ENCODE measurements at regions of chr20 and their contacts with region 1.

Region 1: DNA sequence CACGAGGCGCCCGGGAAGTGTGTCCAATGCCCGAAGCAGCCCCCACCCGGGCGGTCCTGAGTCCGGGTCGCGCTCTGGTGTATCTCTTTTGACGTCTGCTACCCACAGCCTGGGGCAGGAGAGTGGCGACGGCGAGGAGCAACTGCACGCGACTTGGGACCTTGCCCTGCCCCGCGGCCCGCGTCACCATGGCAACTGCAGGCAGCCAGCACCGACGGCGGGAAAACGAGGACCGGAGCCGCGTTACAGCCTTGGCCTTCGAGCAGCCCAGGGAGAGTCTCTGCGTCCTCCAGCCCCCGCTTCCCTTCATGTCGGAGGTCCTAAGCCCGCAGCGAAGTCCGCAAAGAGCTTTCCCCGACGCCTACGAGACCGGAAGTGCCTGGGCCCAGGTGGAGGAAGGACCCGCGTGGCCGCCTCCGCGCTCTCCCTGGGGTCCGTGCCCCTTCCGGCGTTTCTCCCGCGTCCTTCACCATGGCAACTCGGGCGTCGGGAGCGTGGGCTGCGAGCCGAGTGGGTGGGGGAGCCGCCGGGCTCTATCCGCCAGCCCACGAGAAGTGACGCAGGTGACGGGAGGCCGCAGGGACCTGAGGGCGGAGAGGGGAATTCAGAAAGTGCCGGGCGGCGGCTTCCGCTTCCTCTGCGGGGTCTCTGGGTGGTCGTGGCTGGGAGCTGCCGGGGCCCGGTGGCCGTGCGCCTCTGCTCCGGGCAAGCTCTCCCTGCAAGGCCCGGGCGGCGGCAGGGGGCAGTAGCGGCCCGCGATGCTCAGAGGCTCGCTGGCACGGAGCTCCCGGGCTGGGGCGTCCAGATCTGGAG is 88.6 kb upstream of the TGM3 start:
- DNase-seq: peak; percentile 89
- ATAC-seq: peak; percentile 94
- H3K4me3 Mint-ChIP-seq: peak overlapping the region; percentile 76
- H3K27ac Mint-ChIP-seq: no peak overlapping the region
- H3K4me1 Mint-ChIP-seq: no peaks in the 10 kb centered on the region
- H3K27me3 Mint-ChIP-seq: peaks cover 42% of the 10 kb centered on the region
- CTCF ChIP-seq: peak; percentile 57

Region 2: GRCh38 chr20:1622450-1622849 is 584.7 kb before region 1 on chr20:
- CTCF ChIA-PET with region 1: no interaction called
- POLR2A ChIA-PET with region 1: no interaction called
- DNase-seq: no peak
- ATAC-seq: no peak
- H3K4me3 Mint-ChIP-seq: no peak overlapping the region
- H3K27ac Mint-ChIP-seq: no peak overlapping the region
- H3K4me1 Mint-ChIP-seq: peaks cover 19% of the 10 kb centered on the region
- H3K27me3 Mint-ChIP-seq: peaks cover under 1% of the 10 kb centered on the region; the same call in 1 of the 2 replicates
- CTCF ChIP-seq: no peak

Region 3: DNA sequence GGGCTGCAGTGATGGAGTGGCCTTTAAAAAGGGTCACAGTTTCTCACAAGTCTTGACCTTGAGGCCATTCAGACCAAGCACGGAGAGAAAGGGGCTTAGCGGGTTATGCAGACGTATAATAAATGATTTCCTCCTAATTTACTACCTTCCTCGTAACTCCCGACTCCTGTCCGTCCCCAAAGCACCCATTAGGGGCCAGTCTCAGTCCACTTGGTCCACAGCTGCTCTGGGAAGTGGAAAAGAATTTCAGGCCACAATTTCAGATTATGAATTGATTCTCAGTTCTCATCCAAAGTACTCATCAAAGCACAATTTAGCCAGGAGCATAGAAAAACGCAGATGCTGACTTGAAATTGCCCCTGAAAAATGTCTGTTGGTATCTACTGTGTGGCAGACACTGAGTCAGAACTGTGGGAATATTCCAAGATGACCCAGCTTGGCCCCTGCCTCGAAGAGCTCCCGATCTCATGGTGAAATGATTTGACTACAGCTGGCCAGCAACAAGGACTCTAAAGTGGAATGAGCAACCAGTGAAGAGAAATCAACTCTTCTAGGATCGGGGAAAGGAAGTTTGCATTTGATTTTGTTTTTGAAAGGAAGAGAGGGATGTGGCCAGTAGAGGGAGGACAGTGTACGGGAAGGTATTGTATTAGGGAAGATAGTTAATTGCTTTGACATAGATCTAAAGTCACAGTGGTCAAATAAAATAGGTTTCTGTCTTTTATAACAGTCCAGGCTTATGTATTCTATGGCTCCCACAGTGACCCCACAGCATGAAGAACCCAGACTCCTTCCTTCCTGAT is 120.8 kb before region 1 on chr20:
- CTCF ChIA-PET with region 1: no interaction called
- POLR2A ChIA-PET with region 1: no interaction called
- DNase-seq: no peak
- ATAC-seq: no peak
- H3K4me3 Mint-ChIP-seq: no peak overlapping the region
- H3K27ac Mint-ChIP-seq: peak overlapping the region; percentile 0; the same call in 1 of the 2 replicates
- H3K4me1 Mint-ChIP-seq: peaks cover 27% of the 10 kb centered on the region
- H3K27me3 Mint-ChIP-seq: no peaks in the 10 kb centered on the region; the same call in 1 of the 2 replicates
- CTCF ChIP-seq: no peak

Region 4: DNA sequence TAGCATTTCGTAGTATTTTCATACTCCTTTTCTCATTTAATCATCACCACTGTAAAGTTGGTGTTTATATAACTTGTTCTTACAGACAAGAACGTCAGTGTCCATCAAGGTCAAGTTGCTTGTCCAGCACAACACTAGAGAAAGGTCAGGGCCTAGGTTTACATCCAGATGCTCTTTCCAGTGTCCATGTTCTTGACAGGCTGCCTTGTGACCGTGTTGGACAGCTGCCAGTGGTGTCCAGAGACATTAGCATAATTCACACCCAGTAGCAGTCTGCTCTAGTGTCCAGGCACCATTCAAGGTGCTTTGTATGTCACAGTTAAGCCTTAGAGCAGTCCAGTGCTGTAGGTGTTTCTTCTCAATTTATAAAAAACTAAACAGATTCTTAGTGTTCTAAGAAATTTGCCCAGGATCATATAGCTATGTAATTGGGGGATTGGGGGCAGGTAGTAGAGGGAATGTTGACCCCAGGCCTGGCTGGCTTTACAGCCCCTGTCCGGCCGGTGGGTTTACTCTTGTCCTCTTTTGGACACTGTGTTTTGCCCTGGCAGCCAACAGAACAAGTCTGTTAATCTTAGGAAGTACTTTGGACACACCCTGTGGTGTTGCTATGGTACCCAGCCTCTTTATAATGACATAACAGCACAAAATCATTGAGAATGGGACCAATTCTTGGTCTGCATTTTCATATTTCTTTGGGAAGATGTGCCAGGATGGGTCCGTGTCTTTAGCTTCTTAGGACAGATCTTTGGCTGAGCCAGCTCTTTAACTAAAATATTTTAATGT is 97.5 kb before region 1 on chr20:
- CTCF ChIA-PET with region 1: no interaction called
- POLR2A ChIA-PET with region 1: no interaction called
- DNase-seq: no peak
- ATAC-seq: no peak
- H3K4me3 Mint-ChIP-seq: no peak overlapping the region
- H3K27ac Mint-ChIP-seq: no peak overlapping the region
- H3K4me1 Mint-ChIP-seq: peaks cover 20% of the 10 kb centered on the region
- H3K27me3 Mint-ChIP-seq: no peaks in the 10 kb centered on the region
- CTCF ChIP-seq: no peak

Region 5: DNA sequence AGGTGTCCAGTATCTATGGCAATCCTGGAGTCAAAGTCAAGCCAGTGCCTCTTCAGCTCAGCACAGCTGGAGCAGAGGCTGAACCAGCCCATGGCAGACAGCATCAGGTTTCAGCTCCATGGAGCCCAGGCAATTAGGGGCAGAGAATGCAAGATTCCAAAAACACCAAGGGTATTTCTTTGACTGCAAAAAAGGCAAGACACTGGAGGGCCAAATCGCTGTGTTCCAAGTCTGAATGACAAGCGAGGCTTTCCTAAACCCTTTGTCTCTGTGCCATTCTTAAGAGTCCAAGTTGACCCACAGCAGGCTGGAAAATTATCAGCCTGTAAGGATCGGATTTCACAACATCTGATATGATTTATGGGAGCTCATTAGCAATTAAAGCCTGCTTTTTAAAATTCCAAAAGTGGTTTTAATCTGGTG is 38.9 kb after region 1 on chr20:
- CTCF ChIA-PET with region 1: interaction called, 26 read pairs
- POLR2A ChIA-PET with region 1: no interaction called
- DNase-seq: peak; percentile 31
- ATAC-seq: peak; percentile 84
- H3K4me3 Mint-ChIP-seq: no peak overlapping the region; the same call in 1 of the 2 replicates
- H3K27ac Mint-ChIP-seq: peak overlapping the region; percentile 92
- H3K4me1 Mint-ChIP-seq: peaks cover 36% of the 10 kb centered on the region
- H3K27me3 Mint-ChIP-seq: no peaks in the 10 kb centered on the region; the same call in 1 of the 2 replicates
- CTCF ChIP-seq: no peak

Region 6: GRCh38 chr20:2299301-2299700 is 92.1 kb after region 1 on chr20:
- CTCF ChIA-PET with region 1: interaction called, 14 read pairs
- POLR2A ChIA-PET with region 1: no interaction called
- DNase-seq: no peak
- ATAC-seq: no peak
- H3K4me3 Mint-ChIP-seq: no peak overlapping the region
- H3K27ac Mint-ChIP-seq: no peak overlapping the region
- H3K4me1 Mint-ChIP-seq: peaks cover 30% of the 10 kb centered on the region
- H3K27me3 Mint-ChIP-seq: no peaks in the 10 kb centered on the region; the same call in 1 of the 2 replicates
- CTCF ChIP-seq: no peak

Region 7: GRCh38 chr20:2338411-2339066 is 131.4 kb after region 1 on chr20:
- CTCF ChIA-PET with region 1: interaction called, 35 read pairs
- POLR2A ChIA-PET with region 1: interaction called, 4 read pairs
- DNase-seq: no peak
- ATAC-seq: no peak
- H3K4me3 Mint-ChIP-seq: no peak overlapping the region
- H3K27ac Mint-ChIP-seq: no peak overlapping the region
- H3K4me1 Mint-ChIP-seq: no peaks in the 10 kb centered on the region
- H3K27me3 Mint-ChIP-seq: no peaks in the 10 kb centered on the region
- CTCF ChIP-seq: no peak

Region 8: DNA sequence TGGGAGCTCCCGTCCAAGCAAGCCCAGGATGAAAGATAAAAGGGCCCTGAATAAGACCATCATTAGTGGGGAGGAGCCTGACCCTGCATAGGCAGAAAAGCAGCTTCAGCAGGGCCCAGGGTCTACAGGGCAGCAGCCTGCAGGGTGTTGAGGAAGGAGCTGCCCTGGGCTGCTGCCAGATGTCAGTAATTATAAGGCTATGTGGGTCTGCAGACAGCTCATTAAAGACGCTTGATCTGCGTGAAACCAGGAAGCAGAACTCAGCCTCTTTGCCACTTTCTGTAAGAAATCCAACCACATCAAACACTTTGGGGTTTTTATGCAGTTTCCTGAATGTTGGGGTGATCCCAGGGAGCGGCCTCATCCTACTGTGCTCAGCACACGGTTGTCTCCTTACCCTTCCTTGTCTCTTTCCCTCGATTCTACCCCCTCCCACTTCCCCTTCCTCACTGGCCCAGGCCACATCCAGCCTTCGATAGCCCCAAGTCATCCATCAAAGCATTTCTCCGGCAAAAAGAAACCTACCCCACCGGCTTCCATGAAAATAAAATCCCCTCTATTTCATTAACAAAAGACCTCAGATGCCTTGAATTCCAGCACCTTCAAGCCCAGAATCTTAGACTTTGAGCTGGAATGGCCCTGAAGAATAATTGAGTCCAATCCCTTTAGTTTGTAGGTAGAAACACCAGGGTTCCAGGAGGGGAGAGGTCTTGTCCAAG is 172.5 kb after region 1 on chr20:
- CTCF ChIA-PET with region 1: interaction called, 11 read pairs
- POLR2A ChIA-PET with region 1: no interaction called
- DNase-seq: peak; percentile 20
- ATAC-seq: peak; percentile 90
- H3K4me3 Mint-ChIP-seq: no peak overlapping the region; the same call in 1 of the 2 replicates
- H3K27ac Mint-ChIP-seq: peak overlapping the region; percentile 84
- H3K4me1 Mint-ChIP-seq: peaks cover 23% of the 10 kb centered on the region
- H3K27me3 Mint-ChIP-seq: no peaks in the 10 kb centered on the region
- CTCF ChIP-seq: no peak

Region 9: DNA sequence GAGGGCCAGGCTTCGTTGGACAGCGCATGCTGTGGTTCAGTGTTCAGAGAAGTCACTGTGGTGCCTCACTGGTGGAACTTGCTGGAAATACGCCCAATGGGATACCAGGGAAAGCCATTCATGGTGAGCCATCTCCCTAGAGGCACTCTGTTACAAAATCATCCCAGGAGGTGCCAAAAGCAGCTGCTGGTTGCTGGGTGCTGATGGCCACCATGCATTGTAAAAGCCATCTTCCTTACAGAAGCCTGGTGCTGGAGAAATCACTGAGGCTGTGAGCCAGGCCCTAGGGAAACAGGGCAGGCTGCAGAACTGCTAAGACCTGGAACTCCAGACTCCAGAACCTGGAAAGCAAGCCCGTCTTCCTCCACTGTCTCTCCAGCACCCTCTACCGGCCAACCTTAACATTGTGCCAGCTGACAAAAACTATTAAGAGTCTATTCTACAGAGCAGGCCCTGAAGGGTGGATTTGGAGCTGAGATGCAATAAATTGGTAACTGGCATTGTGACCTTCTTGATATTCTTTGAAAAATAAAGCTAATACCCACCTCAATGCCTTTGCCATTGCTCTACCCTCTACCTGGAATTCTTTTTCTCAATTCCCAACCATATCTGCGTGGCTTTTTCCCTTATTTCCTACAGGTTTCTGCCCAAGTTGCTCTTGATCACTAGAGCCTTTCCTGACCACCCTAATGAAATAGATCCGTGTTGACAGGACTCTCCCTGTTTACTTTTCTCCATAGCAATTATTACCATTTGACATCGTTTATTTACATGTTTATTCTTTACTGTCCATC is 245.0 kb after region 1 on chr20:
- CTCF ChIA-PET with region 1: interaction called, 45 read pairs
- POLR2A ChIA-PET with region 1: interaction called, 4 read pairs
- DNase-seq: peak; percentile 91
- ATAC-seq: peak; percentile 86
- H3K4me3 Mint-ChIP-seq: no peak overlapping the region
- H3K27ac Mint-ChIP-seq: no peak overlapping the region
- H3K4me1 Mint-ChIP-seq: no peaks in the 10 kb centered on the region
- H3K27me3 Mint-ChIP-seq: no peaks in the 10 kb centered on the region
- CTCF ChIP-seq: peak; percentile 78

Measured in WTC11 (cell line).